HCT116 (cell line): ENCODE measurements at regions of chr14 and their contacts with region 1.

Region 1: DNA sequence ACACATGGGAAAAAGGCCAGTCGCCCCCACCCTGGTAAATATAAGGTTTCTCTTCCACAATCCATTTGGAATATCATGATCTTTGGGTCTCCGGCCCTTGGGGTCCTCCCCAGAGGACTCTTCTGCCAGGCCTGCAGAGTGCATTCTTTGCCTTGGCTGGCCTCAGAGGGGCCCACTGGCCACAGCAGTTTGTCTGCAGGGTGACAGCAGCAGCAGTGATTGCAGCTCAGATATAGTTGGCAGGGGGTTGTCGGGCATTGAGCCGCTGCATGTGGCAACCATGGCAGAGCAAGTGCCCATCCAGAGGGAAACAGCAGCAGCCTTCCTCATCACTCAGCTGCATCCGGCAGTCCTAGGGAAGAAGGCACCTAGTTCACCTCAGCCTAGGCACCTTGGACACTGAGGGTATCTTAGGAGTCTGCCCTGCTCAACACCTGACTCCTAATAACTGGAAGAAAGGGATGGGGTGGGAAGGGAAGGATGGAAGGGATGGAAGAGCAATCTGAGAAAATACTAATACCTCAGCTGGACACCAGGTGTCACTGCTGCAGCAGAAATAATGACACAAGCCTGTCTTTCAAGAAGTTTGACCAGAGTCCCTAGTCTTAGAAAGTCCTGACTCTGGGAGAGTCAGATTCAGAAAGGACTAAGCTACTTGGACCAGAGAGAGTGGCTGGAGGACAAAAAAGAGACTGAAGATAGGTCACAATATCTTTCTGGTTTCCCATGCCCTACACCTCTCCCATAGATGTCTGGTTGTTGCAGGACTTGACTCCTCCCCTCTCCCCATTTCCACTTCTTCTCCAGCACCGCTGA is 8.9 kb downstream of the AJUBA start:
- DNase-seq: no peak
- ATAC-seq: peak; percentile 64
- H3K4me3 ChIP-seq: no peak overlapping the region
- H3K27ac ChIP-seq: no peak overlapping the region
- H3K4me1 ChIP-seq: peaks cover 36 to 39% of the 10 kb centered on the region in 2 experiments
- H3K27me3 ChIP-seq: no peaks in the 10 kb centered on the region
- CTCF ChIP-seq: peak in 2 of 3 experiments; percentile 61 to 75; a peak in 4 of 6 replicates
- POLR2A ChIP-seq: no peak
- RAD21 ChIP-seq: no peak

Region 2: DNA sequence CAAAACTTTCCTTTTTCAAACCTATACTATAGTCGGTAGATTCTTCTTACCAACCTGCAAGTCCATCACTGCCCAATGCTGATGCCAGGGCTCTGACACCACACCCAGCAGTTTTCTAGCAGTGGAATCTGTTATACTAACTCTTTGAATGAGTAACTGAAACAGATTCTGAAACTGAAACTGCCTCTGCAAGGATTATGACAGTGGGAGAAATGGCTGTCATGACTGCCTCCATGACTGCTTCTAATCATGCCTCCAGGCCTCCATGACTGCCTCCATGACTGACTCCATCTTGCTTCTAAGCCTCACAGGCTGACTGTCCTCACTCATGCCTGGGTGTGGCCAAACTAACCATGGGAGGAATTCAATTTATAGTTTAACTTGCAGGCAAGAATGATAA is 236.4 kb before region 1 on chr14:
- CTCF ChIA-PET with region 1: no interaction called
- POLR2A ChIA-PET with region 1: no interaction called
- RAD21 ChIA-PET with region 1: no interaction called
- intact Hi-C with region 1: no loop called
- DNase-seq: no peak
- ATAC-seq: no peak
- H3K4me3 ChIP-seq: no peak overlapping the region
- H3K27ac ChIP-seq: no peak overlapping the region
- H3K4me1 ChIP-seq: no peaks in the 10 kb centered on the region
- H3K27me3 ChIP-seq: no peaks in the 10 kb centered on the region
- CTCF ChIP-seq: no peak
- POLR2A ChIP-seq: no peak
- RAD21 ChIP-seq: no peak

Region 3: DNA sequence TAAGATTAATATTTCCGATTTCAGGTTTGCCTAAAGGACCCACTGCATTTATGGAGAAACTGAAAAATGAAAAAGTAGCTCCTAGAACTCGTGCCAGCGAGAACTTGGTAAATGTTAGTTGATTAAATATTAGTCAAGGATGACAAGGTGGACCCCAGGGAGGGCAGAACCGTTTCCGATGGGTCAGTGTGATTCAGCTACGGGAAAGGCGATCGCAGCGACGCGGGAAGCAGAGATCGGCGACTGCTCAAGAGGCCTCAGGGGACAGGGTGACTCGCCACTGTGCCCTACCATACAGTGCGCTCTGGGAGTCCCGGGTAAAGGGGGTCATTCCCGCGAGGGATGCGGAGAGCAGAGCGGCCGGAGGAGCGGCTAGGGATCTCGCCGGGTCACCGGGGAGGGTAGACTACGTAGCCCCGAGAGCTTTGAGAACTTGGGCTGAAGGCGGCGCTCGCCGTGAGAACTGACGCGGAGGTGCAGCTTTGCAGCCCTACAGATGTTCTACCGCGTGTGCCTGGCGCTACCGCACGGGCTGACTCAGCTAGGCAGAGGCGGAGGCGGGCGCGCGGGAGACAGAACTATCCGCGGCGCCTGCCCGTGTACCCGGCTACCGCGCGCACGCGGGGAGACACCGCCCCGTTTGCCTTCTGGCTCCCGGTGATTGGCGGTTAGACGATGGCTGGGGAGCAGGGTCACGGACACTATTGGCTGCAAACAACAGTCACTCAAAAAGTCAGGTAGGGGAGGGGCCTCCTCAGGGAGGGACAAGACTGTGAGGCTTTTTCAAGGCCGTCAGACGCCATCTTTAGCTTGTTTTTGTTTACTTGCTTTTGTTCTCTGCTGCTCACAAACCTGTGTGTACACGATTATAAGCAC is 33.4 kb after region 1 on chr14:
- CTCF ChIA-PET with region 1: no interaction called
- POLR2A ChIA-PET with region 1: interaction called, 12 read pairs
- RAD21 ChIA-PET with region 1: no interaction called
- intact Hi-C with region 1: no loop called
- DNase-seq: peak; percentile 96
- ATAC-seq: peak; percentile 93
- H3K4me3 ChIP-seq: peak overlapping the region; percentile 64 to 71
- H3K27ac ChIP-seq: peak overlapping the region; percentile 97
- H3K4me1 ChIP-seq: peaks cover 23 to 60% of the 10 kb centered on the region in 2 experiments
- H3K27me3 ChIP-seq: no peaks in the 10 kb centered on the region
- CTCF ChIP-seq: no peak; a peak in 1 of 6 replicates
- POLR2A ChIP-seq: peak; percentile 94
- RAD21 ChIP-seq: no peak

Region 4: GRCh38 chr14:23034483-23035302 is 61.3 kb after region 1 on chr14 and contains the start of gene PSMB5:
- CTCF ChIA-PET with region 1: no interaction called
- POLR2A ChIA-PET with region 1: no interaction called
- RAD21 ChIA-PET with region 1: no interaction called
- intact Hi-C with region 1: no loop called
- DNase-seq: peak; percentile 98
- ATAC-seq: peak; percentile 93
- H3K4me3 ChIP-seq: peak within 1 kb of the TSS; percentile 84 to 98
- H3K27ac ChIP-seq: peak within 1 kb of the TSS; percentile 84
- H3K4me1 ChIP-seq: peaks cover 10 to 18% of the 10 kb centered on the region in 2 experiments; a peak in 3 of 4 replicates
- H3K27me3 ChIP-seq: no peaks in the 10 kb centered on the region
- CTCF ChIP-seq: no peak
- POLR2A ChIP-seq: peak; percentile 85
- RAD21 ChIP-seq: no peak
- total RNA-seq, gene PSMB5: 212 TPM